Spleen (tissue), 13 donors: ENCODE measurements at regions of chr22 and their contacts with region 1.

Region 1: GRCh38 chr22:39938509-39939111 is 21.6 kb upstream of the TMA7B start:
- DNase-seq: no peak
- H3K4me3 ChIP-seq: no peak overlapping the region
- H3K27ac ChIP-seq: peak overlapping the region in 4 of 8 donors; percentile 24 to 65 (median 53)
- H3K4me1 ChIP-seq: peaks cover 0 to 84% (median 42%) of the 10 kb centered on the region in 6 donors
- H3K27me3 ChIP-seq: no peaks in the 10 kb centered on the region
- CTCF ChIP-seq: no peak
- POLR2A ChIP-seq: no peak

Region 2: GRCh38 chr22:39220897-39221850 is 717.4 kb before region 1 on chr22:
- intact Hi-C with region 1: no loop called
- DNase-seq: peak; percentile 44
- H3K4me3 ChIP-seq: no peak overlapping the region
- H3K27ac ChIP-seq: no peak overlapping the region
- H3K4me1 ChIP-seq: peaks cover 0 to 8% (median 0%) of the 10 kb centered on the region in 6 donors
- H3K27me3 ChIP-seq: peaks cover 0 to 49% (median 0%) of the 10 kb centered on the region in 7 donors
- CTCF ChIP-seq: no peak
- POLR2A ChIP-seq: no peak

Region 3: DNA sequence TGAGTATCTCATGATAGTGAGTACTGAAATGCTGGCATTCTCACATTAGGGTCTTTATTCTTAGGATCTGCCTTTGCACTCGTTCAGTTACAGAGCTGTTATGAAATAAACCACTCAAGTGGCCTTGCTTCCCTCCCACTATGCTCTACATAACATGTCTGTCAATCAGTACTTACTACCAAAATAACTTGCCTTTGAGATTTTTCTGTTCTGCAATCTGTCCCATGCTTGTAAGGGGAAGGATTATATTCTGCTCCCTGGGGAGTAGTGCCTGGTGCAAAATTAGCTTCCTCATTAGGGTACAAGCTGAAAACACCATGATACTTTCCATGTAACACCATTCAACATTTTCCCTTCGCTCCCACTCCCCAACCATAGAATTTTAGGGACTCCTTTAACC is 39.6 kb before region 1 on chr22:
- intact Hi-C with region 1: loop called (anchors 5 kb)
- DNase-seq: no peak
- H3K4me3 ChIP-seq: peak overlapping the region in 1 of 8 donors; percentile 0
- H3K27ac ChIP-seq: peak overlapping the region in 7 of 8 donors; percentile 38 to 84 (median 80)
- H3K4me1 ChIP-seq: peaks cover 25 to 58% (median 34%) of the 10 kb centered on the region in 6 donors
- H3K27me3 ChIP-seq: no peaks in the 10 kb centered on the region
- CTCF ChIP-seq: no peak
- POLR2A ChIP-seq: no peak

Region 4: DNA sequence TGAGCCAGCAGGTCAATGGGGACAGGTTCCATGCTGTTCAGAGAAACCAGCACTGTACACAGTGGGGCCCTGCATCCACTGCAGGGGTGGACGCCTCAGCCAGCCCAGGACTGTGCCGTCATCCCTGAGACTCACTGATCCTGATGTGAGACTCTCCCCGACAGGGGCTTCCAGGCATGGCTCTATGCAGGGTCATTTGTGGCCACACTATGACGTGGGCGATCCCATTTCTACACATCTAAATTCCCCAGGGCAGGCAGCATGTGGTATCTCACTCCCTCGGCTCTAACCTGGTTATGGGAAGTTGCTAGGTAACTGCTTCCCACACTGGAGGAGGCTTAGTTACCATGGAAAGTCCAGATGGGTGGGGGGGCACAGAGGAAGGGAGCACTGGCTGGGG is 42.0 kb after region 1 on chr22:
- intact Hi-C with region 1: no loop called
- DNase-seq: no peak
- H3K4me3 ChIP-seq: no peak overlapping the region
- H3K27ac ChIP-seq: no peak overlapping the region
- H3K4me1 ChIP-seq: no peaks in the 10 kb centered on the region
- H3K27me3 ChIP-seq: peaks cover 0 to 17% (median 0%) of the 10 kb centered on the region in 7 donors
- CTCF ChIP-seq: no peak
- POLR2A ChIP-seq: no peak